ENCODE measurements at regions of chr6 and their contacts with region 1.

Region 1: DNA sequence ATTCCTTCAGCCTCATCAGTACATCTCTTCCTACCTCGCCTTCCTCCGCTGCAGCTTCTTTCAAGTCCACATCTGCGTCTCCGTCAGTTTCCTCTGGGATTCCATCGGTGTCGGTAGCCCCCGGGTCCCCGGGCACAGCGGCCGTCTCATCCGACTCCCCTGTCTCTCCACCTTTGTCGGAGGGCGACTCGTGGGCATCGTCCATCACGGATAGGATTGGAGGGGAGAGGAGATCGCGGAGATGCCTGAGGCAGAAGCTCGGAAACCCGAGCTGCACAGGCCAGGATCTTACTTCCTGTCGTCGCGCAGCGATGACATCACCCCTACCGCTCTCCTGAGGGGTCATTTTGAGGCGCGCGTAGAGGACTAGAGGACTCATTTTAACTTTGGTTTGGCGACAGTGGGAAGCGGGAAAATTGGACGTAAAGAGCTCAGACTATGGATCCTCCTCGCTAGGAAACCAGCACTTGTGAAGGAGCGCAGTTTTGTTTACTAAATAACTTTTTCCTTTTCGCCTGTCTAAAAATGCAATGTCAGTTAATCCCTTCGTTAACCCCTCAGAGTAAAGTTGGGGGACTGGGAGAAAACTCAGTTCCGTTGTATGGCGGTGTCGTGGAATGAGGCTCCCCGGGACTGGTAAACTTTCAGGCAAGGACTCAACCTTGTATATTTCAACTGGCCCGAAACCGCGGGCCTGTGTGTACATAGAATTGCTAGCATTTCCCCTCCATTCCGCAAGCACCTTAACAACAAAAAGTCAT is at the start of gene TAF11:
- DNase-seq: peak; percentile 83 to 93 (median 85)
- H3K4me3 ChIP-seq: peak within 1 kb of the TSS; percentile 89
- H3K4me3 Mint-ChIP-seq: peak within 1 kb of the TSS; percentile 99 to 100 (median 100)
- H3K27ac ChIP-seq: peak within 1 kb of the TSS; percentile 94
- H3K27ac Mint-ChIP-seq: peak within 1 kb of the TSS; percentile 94 to 100 (median 99)
- H3K4me1 ChIP-seq: peaks cover 27% of the 10 kb centered on the region
- H3K4me1 Mint-ChIP-seq: peaks cover 46 to 74% (median 65%) of the 10 kb centered on the region in 3 donors
- H3K27me3 ChIP-seq: no peaks in the 10 kb centered on the region
- H3K27me3 Mint-ChIP-seq: peaks cover 0 to 4% of the 10 kb centered on the region in 2 donors
- total RNA-seq, gene TAF11: 28.9 to 34.1 TPM

Region 2: GRCh38 chr6:34546551-34547321 is 341.2 kb before region 1 on chr6:
- CTCF ChIA-PET with region 1: no interaction called
- POLR2A ChIA-PET with region 1: no interaction called
- DNase-seq: no peak
- H3K4me3 ChIP-seq: no peak overlapping the region
- H3K4me3 Mint-ChIP-seq: no peak overlapping the region
- H3K27ac ChIP-seq: no peak overlapping the region
- H3K27ac Mint-ChIP-seq: no peak overlapping the region
- H3K4me1 ChIP-seq: no peaks in the 10 kb centered on the region
- H3K4me1 Mint-ChIP-seq: no peaks in the 10 kb centered on the region
- H3K27me3 ChIP-seq: no peaks in the 10 kb centered on the region
- H3K27me3 Mint-ChIP-seq: no peaks in the 10 kb centered on the region

Region 3: DNA sequence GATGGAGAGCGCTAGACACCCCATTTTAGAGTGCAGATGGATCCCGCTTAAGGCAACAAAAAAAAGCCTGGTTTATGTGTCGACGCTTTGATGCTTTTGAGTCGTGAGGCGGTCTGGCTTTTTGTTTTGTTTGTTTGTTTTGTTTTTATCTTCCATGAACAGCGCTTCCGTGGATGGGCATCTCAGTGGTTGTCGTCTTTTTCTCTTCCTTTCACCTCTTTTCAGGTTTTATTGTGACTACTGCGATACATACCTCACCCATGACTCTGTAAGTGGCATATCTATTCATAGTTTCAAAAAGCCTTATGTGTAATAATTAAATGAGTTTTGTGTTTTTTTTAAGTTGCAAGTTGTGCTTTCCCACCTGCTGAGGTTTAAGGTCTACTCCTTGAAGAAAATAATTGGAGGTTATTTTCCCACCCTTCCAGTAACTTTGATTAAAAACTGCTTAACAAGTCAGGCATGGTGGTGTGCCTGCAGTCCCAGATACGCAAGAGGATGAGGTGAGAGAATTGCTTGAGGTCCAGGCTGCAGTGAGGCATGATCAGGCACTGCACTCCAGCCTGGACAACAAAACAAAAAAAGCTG is 130.2 kb before region 1 on chr6:
- CTCF ChIA-PET with region 1: interaction called, 6 read pairs
- POLR2A ChIA-PET with region 1: interaction called, 14 read pairs
- DNase-seq: no peak
- H3K4me3 ChIP-seq: peak overlapping the region; percentile 87
- H3K4me3 Mint-ChIP-seq: no peak overlapping the region
- H3K27ac ChIP-seq: peak overlapping the region; percentile 93
- H3K27ac Mint-ChIP-seq: no peak overlapping the region
- H3K4me1 ChIP-seq: peaks cover 14% of the 10 kb centered on the region
- H3K4me1 Mint-ChIP-seq: peaks cover 5 to 29% (median 9%) of the 10 kb centered on the region in 3 donors
- H3K27me3 ChIP-seq: no peaks in the 10 kb centered on the region
- H3K27me3 Mint-ChIP-seq: no peaks in the 10 kb centered on the region

Region 4: GRCh38 chr6:34791701-34792235 is 96.2 kb before region 1 on chr6 and contains the start of gene BLTP3A:
- CTCF ChIA-PET with region 1: no interaction called
- POLR2A ChIA-PET with region 1: interaction called, 13 read pairs
- DNase-seq: peak; percentile 60 to 82 (median 75)
- H3K4me3 ChIP-seq: peak within 1 kb of the TSS; percentile 98
- H3K4me3 Mint-ChIP-seq: peak within 1 kb of the TSS; percentile 92 to 98 (median 97)
- H3K27ac ChIP-seq: peak within 1 kb of the TSS; percentile 93
- H3K27ac Mint-ChIP-seq: peak within 1 kb of the TSS; percentile 83 to 97 (median 93)
- H3K4me1 ChIP-seq: peaks cover 19% of the 10 kb centered on the region
- H3K4me1 Mint-ChIP-seq: peaks cover 22 to 25% (median 23%) of the 10 kb centered on the region in 3 donors
- H3K27me3 ChIP-seq: no peaks in the 10 kb centered on the region
- H3K27me3 Mint-ChIP-seq: no peaks in the 10 kb centered on the region
- total RNA-seq, gene BLTP3A: 18.8 to 19.4 TPM

Region 5: GRCh38 chr6:34912715-34913464 is 25.0 kb after region 1 on chr6:
- CTCF ChIA-PET with region 1: interaction called, 3 read pairs
- POLR2A ChIA-PET with region 1: interaction called, 13 read pairs
- DNase-seq: peak in 3 of 5 donors; percentile 53 to 62 (median 59)
- H3K4me3 ChIP-seq: peak overlapping the region; percentile 8
- H3K4me3 Mint-ChIP-seq: peak overlapping the region; percentile 0 to 76 (median 66)
- H3K27ac ChIP-seq: no peak overlapping the region
- H3K27ac Mint-ChIP-seq: peak overlapping the region in 6 of 8 donors; percentile 25 to 77 (median 54)
- H3K4me1 ChIP-seq: peaks cover 17% of the 10 kb centered on the region
- H3K4me1 Mint-ChIP-seq: peaks cover 29 to 35% (median 34%) of the 10 kb centered on the region in 3 donors
- H3K27me3 ChIP-seq: no peaks in the 10 kb centered on the region
- H3K27me3 Mint-ChIP-seq: peaks cover 0 to 3% of the 10 kb centered on the region in 2 donors